ENCODE measurements at regions of chr14 and their contacts with region 1.

Region 1: DNA sequence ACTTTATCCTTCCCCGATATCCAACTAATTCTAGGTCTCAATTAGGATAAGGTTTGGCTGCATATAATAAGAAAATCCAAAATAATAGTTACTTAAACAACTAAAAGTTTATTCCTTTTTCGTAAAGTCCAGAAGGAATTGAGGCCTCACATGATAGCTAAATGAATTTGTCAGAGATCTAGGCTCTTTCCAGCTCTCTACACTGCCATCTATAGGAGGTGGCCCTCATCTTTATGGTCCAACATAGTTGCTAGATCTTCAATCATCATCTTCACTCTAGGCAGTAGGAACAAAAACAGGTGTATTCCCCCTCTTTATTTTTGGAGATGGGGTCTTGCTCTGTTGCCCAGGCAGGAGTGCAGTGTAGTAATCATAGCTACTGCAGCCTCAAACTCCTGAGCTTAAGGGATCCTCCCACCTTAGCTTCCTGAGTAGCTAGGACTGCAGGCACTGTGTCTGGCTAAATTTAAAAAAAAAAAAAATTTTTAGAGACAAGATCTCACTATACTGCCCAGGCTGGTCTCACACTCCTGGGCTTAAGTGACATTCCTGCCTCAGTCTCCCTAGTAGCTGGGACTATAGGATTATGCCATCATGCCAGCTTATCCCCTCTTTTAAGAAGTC is 46.5 kb upstream of the SAV1 start:
- DNase-seq: peak; percentile 67
- ATAC-seq: peak; percentile 61
- H3K4me3 ChIP-seq: no peak overlapping the region
- H3K4me3 Mint-ChIP-seq: no peak overlapping the region
- H3K27ac ChIP-seq: no peak overlapping the region
- H3K27ac Mint-ChIP-seq: no peak overlapping the region
- H3K4me1 ChIP-seq: no peaks in the 10 kb centered on the region
- H3K4me1 Mint-ChIP-seq: no peaks in the 10 kb centered on the region
- H3K27me3 ChIP-seq: no peaks in the 10 kb centered on the region
- H3K27me3 Mint-ChIP-seq: no peaks in the 10 kb centered on the region
- CTCF ChIP-seq: peak; percentile 74

Region 2: DNA sequence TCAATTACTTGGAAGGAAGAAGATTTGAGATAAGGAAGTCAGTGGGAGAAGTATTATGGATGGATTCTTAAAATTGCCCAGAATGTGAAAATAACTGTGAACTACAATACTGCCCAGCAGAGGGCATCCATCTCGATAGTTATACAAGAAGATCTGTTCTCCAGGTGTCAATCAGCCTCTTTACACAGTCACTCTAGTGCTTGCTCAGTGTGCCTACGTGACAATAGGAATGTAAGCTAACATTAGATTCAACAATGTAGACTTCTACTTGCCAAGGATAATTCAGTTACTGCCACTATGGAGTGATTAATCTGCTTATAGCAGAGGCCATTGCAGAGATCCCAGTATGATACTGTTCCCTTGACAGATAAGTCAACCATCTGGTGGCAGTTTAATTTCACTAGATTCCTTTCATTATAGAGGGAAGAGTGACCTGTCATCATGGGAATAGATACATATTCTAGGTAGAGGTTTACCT is 171.6 kb before region 1 on chr14:
- CTCF ChIA-PET with region 1: interaction called, 53 read pairs
- POLR2A ChIA-PET with region 1: no interaction called
- intact Hi-C with region 1: loop called (anchors 1 kb)
- DNase-seq: peak; percentile 65
- ATAC-seq: peak; percentile 58
- H3K4me3 ChIP-seq: no peak overlapping the region
- H3K4me3 Mint-ChIP-seq: no peak overlapping the region
- H3K27ac ChIP-seq: no peak overlapping the region
- H3K27ac Mint-ChIP-seq: no peak overlapping the region
- H3K4me1 ChIP-seq: no peaks in the 10 kb centered on the region
- H3K4me1 Mint-ChIP-seq: peaks cover 8% of the 10 kb centered on the region
- H3K27me3 ChIP-seq: no peaks in the 10 kb centered on the region
- H3K27me3 Mint-ChIP-seq: no peaks in the 10 kb centered on the region
- CTCF ChIP-seq: peak; percentile 76

Region 3: GRCh38 chr14:50619556-50620141 is 94.9 kb before region 1 on chr14:
- CTCF ChIA-PET with region 1: interaction called, 90 read pairs
- POLR2A ChIA-PET with region 1: interaction called, 4 read pairs
- intact Hi-C with region 1: loop called (anchors 1 kb)
- DNase-seq: peak; percentile 56
- ATAC-seq: no peak
- H3K4me3 ChIP-seq: no peak overlapping the region
- H3K4me3 Mint-ChIP-seq: no peak overlapping the region
- H3K27ac ChIP-seq: no peak overlapping the region
- H3K27ac Mint-ChIP-seq: no peak overlapping the region
- H3K4me1 ChIP-seq: no peaks in the 10 kb centered on the region
- H3K4me1 Mint-ChIP-seq: peaks cover 5% of the 10 kb centered on the region
- H3K27me3 ChIP-seq: no peaks in the 10 kb centered on the region
- H3K27me3 Mint-ChIP-seq: no peaks in the 10 kb centered on the region
- CTCF ChIP-seq: peak; percentile 73

Region 4: GRCh38 chr14:50647282-50647681 is 67.3 kb before region 1 on chr14:
- CTCF ChIA-PET with region 1: interaction called, 13 read pairs
- POLR2A ChIA-PET with region 1: no interaction called
- intact Hi-C with region 1: no loop called
- DNase-seq: peak; percentile 56
- ATAC-seq: peak; percentile 95
- H3K4me3 ChIP-seq: peak overlapping the region in 3 of 5 experiments; percentile 22 to 50 (median 25)
- H3K4me3 Mint-ChIP-seq: peak overlapping the region; percentile 64
- H3K27ac ChIP-seq: peak overlapping the region; percentile 11 to 70
- H3K27ac Mint-ChIP-seq: peak overlapping the region; percentile 39
- H3K4me1 ChIP-seq: peaks cover 33 to 43% of the 10 kb centered on the region in 2 donors
- H3K4me1 Mint-ChIP-seq: peaks cover 50% of the 10 kb centered on the region
- H3K27me3 ChIP-seq: no peaks in the 10 kb centered on the region
- H3K27me3 Mint-ChIP-seq: no peaks in the 10 kb centered on the region
- CTCF ChIP-seq: no peak

Region 5: DNA sequence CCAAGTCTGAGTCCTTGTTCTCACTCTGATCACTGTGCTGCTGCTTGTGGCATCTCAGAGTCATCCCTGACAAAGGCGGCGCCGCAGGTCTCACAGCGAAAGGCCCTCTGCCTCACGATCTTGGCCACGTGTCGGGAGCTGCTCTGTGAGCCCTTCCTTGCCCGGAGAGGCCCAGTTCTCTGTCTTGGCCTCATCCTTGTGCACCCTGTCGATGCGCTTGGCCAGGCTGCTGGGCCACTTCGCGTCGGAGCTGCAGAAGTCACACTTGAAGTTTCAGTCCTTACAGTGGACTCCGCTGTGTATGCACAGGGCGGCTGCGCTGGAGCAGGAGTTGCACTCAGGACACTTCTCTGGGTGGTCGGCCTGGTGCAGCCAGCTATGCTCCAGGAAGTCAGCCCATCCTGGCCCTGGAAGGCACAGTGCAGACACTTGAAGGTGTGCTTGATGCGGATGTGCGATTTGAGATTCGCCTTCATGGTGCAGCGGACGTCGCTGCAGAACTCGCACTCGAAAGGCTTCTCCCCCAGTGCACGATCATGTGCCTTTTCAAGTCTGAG is 10.0 kb before region 1 on chr14:
- CTCF ChIA-PET with region 1: interaction called, 15 read pairs
- POLR2A ChIA-PET with region 1: interaction called, 4 read pairs
- intact Hi-C with region 1: no loop called
- DNase-seq: no peak
- ATAC-seq: no peak
- H3K4me3 ChIP-seq: no peak overlapping the region
- H3K4me3 Mint-ChIP-seq: no peak overlapping the region
- H3K27ac ChIP-seq: no peak overlapping the region
- H3K27ac Mint-ChIP-seq: no peak overlapping the region
- H3K4me1 ChIP-seq: no peaks in the 10 kb centered on the region
- H3K4me1 Mint-ChIP-seq: peaks cover 2% of the 10 kb centered on the region
- H3K27me3 ChIP-seq: no peaks in the 10 kb centered on the region
- H3K27me3 Mint-ChIP-seq: peaks cover 4% of the 10 kb centered on the region
- CTCF ChIP-seq: no peak

Region 6: DNA sequence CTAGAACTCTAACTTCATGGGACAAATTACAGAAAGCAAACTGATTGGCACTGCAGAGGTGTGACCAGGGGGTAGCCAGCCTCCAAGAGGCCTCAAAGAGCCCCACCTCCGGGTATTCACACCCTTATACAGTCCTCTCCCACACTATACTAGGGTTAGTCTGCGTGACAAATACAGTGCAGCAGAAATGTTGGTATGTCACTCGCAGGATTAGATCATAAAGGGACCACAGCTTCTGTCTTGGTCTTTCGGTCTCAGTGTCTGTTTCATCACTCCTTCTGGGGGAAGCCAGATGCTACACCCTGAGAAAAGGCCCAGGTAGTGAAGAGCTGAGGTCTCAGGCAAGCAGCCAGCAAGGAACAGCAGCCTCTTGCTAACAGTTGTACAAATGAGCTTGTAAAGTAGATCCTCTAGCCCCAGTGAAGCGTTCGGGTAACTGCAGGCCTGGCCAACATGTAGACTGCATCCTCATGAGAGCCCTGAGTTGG is 22.4 kb after region 1 on chr14:
- CTCF ChIA-PET with region 1: interaction called, 18 read pairs
- POLR2A ChIA-PET with region 1: no interaction called
- intact Hi-C with region 1: no loop called
- DNase-seq: no peak
- ATAC-seq: no peak
- H3K4me3 ChIP-seq: no peak overlapping the region
- H3K4me3 Mint-ChIP-seq: no peak overlapping the region
- H3K27ac ChIP-seq: peak overlapping the region; percentile 3 to 18
- H3K27ac Mint-ChIP-seq: no peak overlapping the region
- H3K4me1 ChIP-seq: peaks cover 3 to 4% of the 10 kb centered on the region in 2 donors
- H3K4me1 Mint-ChIP-seq: peaks cover 5% of the 10 kb centered on the region
- H3K27me3 ChIP-seq: no peaks in the 10 kb centered on the region
- H3K27me3 Mint-ChIP-seq: no peaks in the 10 kb centered on the region
- CTCF ChIP-seq: no peak

Measured in B cell (primary cell).